Tibial artery (tissue), 4 donors: ENCODE measurements at regions of chr17 and their contacts with region 1.

Region 1: GRCh38 chr17:76714822-76715495 is 4.2 kb upstream of the MXRA7 start:
- DNase-seq: peak; percentile 77 to 82
- H3K4me3 ChIP-seq: no peak overlapping the region
- H3K27ac ChIP-seq: peak overlapping the region; percentile 48 to 54
- H3K4me1 ChIP-seq: peaks cover 5 to 37% (median 17%) of the 10 kb centered on the region in 4 donors
- H3K27me3 ChIP-seq: no peaks in the 10 kb centered on the region
- CTCF ChIP-seq: peak; percentile 75 to 78

Region 2: GRCh38 chr17:76523084-76524037 is 191.6 kb before region 1 on chr17:
- intact Hi-C with region 1: loop called (anchors 10 kb)
- DNase-seq: no peak
- H3K4me3 ChIP-seq: no peak overlapping the region
- H3K27ac ChIP-seq: no peak overlapping the region
- H3K4me1 ChIP-seq: peaks cover 0 to 21% (median 10%) of the 10 kb centered on the region in 4 donors
- H3K27me3 ChIP-seq: peaks cover 0 to 48% of the 10 kb centered on the region in 2 donors
- CTCF ChIP-seq: peak; percentile 99 to 100

Region 3: DNA sequence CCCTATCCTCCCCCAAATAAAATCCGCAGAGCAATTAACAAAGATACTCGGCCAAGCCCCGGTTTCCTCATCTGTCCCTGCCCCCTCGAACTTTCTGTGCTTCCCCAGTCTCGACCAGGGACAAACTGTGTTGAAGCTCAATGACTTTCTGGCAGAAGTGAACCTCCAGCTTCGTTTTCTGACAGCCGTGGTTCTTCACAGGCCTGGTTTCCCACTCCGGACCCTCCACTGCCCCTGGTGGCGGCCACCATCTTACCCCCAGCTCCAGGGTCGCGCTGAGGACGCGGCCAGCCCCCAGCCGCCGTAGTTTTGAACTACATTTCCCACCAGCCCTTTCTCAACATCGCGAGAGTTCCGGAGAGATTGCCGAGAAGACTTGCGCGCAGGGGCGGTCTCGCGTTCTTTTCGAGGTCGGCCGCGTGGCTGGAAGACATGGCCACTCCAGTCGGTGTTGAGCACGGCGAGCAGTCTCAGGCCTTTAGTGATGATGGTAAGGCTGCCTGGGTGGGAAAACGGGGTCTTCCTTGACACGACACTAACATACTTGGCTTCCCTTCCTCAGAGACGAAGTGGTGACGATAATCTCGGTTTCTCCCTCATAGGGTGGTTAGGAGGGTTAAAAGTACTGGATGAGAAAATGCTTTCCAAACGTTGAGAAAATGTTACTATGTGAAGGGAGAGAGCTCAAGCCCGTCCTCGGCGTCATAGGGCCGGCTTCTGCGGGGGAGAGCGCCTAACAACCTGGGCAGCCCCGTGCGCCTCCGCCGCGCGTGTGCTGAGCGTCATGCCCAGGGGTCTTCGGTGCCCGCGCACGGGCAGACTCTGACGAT is 157.4 kb before region 1 on chr17:
- intact Hi-C with region 1: loop called (anchors 10 kb)
- DNase-seq: peak; percentile 94 to 96
- H3K4me3 ChIP-seq: peak overlapping the region; percentile 61 to 70
- H3K27ac ChIP-seq: peak overlapping the region; percentile 81 to 83
- H3K4me1 ChIP-seq: peaks cover 0 to 54% (median 22%) of the 10 kb centered on the region in 4 donors
- H3K27me3 ChIP-seq: no peaks in the 10 kb centered on the region
- CTCF ChIP-seq: peak; percentile 30 to 63

Region 4: GRCh38 chr17:76623271-76624146 is 91.5 kb before region 1 on chr17:
- intact Hi-C with region 1: loop called (anchors 10 kb)
- DNase-seq: peak; percentile 57 to 77
- H3K4me3 ChIP-seq: no peak overlapping the region
- H3K27ac ChIP-seq: no peak overlapping the region
- H3K4me1 ChIP-seq: peaks cover 0 to 7% (median 0%) of the 10 kb centered on the region in 4 donors
- H3K27me3 ChIP-seq: peaks cover 0 to 33% of the 10 kb centered on the region in 2 donors
- CTCF ChIP-seq: peak; percentile 85 to 96

Region 5: GRCh38 chr17:76671123-76671911 is 43.6 kb before region 1 on chr17:
- intact Hi-C with region 1: loop called (anchors 5 kb)
- DNase-seq: peak; percentile 100
- H3K4me3 ChIP-seq: peak overlapping the region; percentile 55 to 67
- H3K27ac ChIP-seq: peak overlapping the region; percentile 69 to 76
- H3K4me1 ChIP-seq: peaks cover 0 to 13% (median 8%) of the 10 kb centered on the region in 4 donors
- H3K27me3 ChIP-seq: peaks cover 0 to 10% of the 10 kb centered on the region in 2 donors
- CTCF ChIP-seq: no peak